CD8-positive, alpha-beta T cell (primary cell): ENCODE measurements at regions of chr5 and their contacts with region 1.

Region 1: DNA sequence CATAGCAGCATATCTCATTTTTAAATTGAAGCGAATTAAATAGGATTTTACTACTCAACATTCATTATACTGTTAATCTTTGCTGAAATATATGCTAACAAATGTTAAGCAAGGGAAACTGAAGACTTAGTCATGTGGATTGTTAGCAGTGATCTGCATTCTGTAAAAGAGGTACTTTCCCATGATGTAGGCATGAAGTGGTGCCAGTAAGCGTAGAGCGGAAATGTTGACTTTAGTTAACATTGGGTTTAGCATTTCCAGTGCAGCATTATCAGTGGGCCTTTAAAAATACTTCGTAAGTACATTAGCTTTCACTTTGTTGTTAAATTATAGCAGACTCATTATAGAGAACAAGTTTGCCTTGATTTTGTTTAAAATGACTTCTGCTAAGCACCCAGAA is 130.3 kb downstream of the CDC42SE2 start:
- DNase-seq: peak in 6 of 9 experiments; percentile 24 to 92 (median 47)
- ATAC-seq: peak; percentile 87
- H3K4me3 ChIP-seq: no peak overlapping the region
- H3K4me3 Mint-ChIP-seq: peak overlapping the region; percentile 52
- H3K27ac ChIP-seq: peak overlapping the region; percentile 50 to 85
- H3K27ac Mint-ChIP-seq: peak overlapping the region; percentile 89
- H3K4me1 ChIP-seq: peaks cover 66% of the 10 kb centered on the region
- H3K4me1 Mint-ChIP-seq: peaks cover 86% of the 10 kb centered on the region
- H3K27me3 ChIP-seq: no peaks in the 10 kb centered on the region
- H3K27me3 Mint-ChIP-seq: no peaks in the 10 kb centered on the region
- CTCF ChIP-seq: no peak

Region 2: DNA sequence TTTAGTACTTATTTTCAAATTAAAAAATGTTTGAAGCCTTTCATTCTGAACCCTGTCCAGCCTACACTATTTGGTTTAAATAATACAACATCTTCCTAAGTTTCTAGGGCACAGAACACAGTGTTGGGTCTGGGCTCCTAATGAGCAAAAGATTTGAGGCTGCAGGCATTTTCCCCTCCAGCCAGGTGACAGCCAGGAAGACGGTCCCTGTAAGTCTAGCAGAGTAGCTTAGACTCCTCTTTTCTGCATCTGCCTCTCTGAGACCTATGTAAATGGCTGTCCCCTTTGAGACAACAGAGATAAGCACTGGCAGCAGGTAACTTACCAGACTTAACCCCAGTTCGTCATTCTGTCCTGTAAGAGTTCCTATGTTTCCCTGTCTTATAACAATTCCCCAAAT is 11.5 kb after region 1 on chr5:
- CTCF ChIA-PET with region 1: interaction called, 4 read pairs
- POLR2A ChIA-PET with region 1: interaction called, 6 read pairs
- intact Hi-C with region 1: loop called in 1 of 2 experiments (anchors 1 kb)
- DNase-seq: no peak
- ATAC-seq: no peak
- H3K4me3 ChIP-seq: no peak overlapping the region
- H3K4me3 Mint-ChIP-seq: no peak overlapping the region
- H3K27ac ChIP-seq: no peak overlapping the region
- H3K27ac Mint-ChIP-seq: peak overlapping the region; percentile 77
- H3K4me1 ChIP-seq: no peaks in the 10 kb centered on the region
- H3K4me1 Mint-ChIP-seq: peaks cover 20% of the 10 kb centered on the region
- H3K27me3 ChIP-seq: no peaks in the 10 kb centered on the region
- H3K27me3 Mint-ChIP-seq: no peaks in the 10 kb centered on the region
- CTCF ChIP-seq: no peak